Dendritic cell treated with granulocyte-macrophage colony-stimulating factor and Interleukin-4, amounts not matched to agents 40 ng/mL and 50 ng/mL, for 4 days (primary cell): ENCODE measurements at regions of chr2 and their contacts with region 1.

Region 1: DNA sequence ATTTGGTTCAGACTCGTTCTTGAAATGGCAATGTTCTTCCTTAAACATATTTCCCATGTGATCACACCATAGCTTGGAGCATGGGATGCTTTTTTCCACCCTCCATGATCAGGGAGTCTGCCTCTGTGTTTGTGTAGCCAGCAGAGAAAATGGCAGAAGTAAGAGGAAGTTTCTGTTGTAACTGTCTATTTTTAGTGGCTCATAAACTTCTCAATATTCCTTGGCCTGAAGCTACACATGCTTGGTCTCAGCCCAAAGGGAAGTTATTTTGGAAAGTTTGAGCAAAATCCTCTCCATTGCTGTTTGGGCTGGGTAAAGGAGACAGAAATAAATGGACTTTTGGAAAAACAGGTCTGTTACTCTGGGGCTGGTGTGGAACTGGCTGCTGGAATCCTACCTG is 33.4 kb upstream of the ITGA6 start:
- H3K4me3 Mint-ChIP-seq: no peak overlapping the region
- H3K27ac Mint-ChIP-seq: no peak overlapping the region
- H3K4me1 Mint-ChIP-seq: peaks cover 33% of the 10 kb centered on the region
- H3K27me3 Mint-ChIP-seq: peaks cover 2% of the 10 kb centered on the region

Region 2: DNA sequence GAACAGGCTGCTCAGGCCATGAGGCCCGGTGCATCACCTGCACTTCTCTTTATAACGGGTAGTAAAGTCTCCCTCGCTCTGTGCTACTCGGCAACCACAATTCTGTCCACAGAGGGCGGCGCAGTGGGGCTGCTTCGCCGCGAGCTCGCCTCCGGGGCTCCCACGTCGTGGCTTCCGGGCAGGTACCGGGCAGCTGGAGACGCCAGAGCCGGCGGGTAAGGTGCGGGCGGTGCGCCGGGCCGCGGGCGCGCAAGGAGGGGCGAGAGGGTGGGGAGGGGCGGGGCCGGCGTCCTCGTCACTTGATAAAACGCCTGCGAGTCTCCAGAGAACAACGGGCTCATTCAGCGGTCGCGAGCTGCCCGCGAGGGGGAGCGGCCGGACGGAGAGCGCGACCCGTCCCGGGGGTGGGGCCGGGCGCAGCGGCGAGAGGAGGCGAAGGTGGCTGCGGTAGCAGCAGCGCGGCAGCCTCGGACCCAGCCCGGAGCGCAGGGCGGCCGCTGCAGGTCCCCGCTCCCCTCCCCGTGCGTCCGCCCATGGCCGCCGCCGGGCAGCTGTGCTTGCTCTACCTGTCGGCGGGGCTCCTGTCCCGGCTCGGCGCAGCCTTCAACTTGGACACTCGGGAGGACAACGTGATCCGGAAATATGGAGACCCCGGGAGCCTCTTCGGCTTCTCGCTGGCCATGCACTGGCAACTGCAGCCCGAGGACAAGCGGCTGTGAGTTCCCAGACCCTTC is 33.4 kb after region 1 on chr2 and contains the start of gene ITGA6:
- intact Hi-C with region 1: loop called (anchors 5 kb)
- H3K4me3 Mint-ChIP-seq: peak within 1 kb of the TSS; percentile 75
- H3K27ac Mint-ChIP-seq: no peak within 1 kb of the TSS
- H3K4me1 Mint-ChIP-seq: peaks cover 22% of the 10 kb centered on the region
- H3K27me3 Mint-ChIP-seq: peaks cover 63% of the 10 kb centered on the region